Activated T-helper 1 cell treated with anti-CD3 and anti-CD28 coated beads, Interleukin-12 subunit alpha, Interleukin-12 subunit beta, Interleukin-2, Interleukin-4 antibody, amounts not matched to agents 30 ng/mL and 10 ng/mL and 1 ng/mL, durations not matched to agents 14 hours and 24 hours and 36 hours (primary cell): ENCODE measurements at regions of chr1 and their contacts with region 1.

Region 1: DNA sequence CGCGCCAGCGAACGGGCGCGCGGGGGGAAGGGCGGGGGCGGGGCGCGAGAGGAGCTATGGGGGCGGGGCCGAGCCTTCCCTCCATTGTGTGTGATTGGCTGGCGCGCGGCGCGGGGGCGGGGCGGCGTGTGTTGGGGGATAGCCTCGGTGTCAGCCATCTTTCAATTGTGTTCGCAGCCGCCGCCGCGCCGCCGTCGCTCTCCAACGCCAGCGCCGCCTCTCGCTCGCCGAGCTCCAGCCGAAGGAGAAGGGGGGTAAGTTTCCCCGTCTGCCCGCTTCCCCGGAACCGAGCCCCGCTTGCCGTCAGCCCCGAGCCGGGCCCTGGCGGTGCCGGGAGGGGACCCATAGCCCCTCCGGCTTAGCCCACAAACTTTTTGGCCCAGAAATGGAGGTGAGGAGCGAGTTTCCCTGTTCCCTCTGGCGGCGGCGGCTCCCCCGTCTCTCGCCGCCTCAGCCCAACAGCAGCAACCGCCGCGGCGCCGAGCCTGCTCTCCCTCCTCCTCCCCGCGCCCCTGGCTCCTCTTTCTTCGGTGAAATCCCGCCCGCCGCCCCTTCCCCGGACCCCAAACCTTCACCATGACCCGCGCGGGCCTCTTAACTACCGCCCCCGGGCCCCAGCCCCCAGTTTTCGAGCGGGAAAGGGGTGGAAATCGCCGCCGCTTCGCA is at the start of gene H3-3A:
- DNase-seq: peak; percentile 97
- H3K4me3 Mint-ChIP-seq: peak within 1 kb of the TSS; percentile 100
- H3K27ac Mint-ChIP-seq: peak within 1 kb of the TSS; percentile 100
- H3K4me1 Mint-ChIP-seq: peaks cover 36% of the 10 kb centered on the region
- H3K27me3 Mint-ChIP-seq: no peaks in the 10 kb centered on the region
- total RNA-seq, gene H3-3A: 416 and 426 TPM in 2 replicates

Region 2: DNA sequence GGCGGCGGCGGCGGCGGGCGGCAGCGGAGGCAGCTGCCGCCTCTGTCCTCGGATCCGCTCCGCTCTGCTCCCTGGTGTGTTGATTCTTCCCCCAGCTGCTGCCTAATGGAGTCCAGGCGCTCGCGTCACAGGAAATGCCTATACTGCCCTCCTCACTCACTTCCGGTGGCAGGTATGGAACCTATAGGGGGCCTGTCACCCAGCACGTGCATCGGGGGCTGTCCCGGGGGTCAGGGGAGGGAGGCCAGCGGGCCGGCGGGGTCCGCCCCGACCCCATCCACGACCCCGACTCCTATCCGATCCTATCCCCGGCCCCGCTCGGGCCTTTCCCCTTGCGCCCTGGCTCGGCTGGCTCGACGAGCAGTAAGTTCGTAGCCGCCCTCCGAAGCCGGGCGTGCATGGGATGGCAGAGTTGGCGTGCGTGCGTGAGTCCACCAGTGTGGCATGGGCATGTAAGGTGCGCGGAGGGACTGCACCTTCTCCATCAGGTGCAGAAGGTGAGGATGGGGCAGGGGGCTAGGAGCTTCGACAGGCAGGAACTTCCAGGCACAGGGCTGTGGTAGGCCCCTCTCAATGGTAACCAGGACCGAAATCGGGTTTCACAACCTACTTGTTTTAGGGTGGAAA is 1627.9 kb before region 1 on chr1 and contains the start of gene WDR26:
- intact Hi-C with region 1: loop called (anchors 2 kb)
- DNase-seq: peak; percentile 83
- H3K4me3 Mint-ChIP-seq: peak within 1 kb of the TSS; percentile 92
- H3K27ac Mint-ChIP-seq: peak within 1 kb of the TSS; percentile 95
- H3K4me1 Mint-ChIP-seq: peaks cover 53% of the 10 kb centered on the region
- H3K27me3 Mint-ChIP-seq: no peaks in the 10 kb centered on the region
- total RNA-seq, gene WDR26: 91.6 and 95.8 TPM in 2 replicates

Region 3: DNA sequence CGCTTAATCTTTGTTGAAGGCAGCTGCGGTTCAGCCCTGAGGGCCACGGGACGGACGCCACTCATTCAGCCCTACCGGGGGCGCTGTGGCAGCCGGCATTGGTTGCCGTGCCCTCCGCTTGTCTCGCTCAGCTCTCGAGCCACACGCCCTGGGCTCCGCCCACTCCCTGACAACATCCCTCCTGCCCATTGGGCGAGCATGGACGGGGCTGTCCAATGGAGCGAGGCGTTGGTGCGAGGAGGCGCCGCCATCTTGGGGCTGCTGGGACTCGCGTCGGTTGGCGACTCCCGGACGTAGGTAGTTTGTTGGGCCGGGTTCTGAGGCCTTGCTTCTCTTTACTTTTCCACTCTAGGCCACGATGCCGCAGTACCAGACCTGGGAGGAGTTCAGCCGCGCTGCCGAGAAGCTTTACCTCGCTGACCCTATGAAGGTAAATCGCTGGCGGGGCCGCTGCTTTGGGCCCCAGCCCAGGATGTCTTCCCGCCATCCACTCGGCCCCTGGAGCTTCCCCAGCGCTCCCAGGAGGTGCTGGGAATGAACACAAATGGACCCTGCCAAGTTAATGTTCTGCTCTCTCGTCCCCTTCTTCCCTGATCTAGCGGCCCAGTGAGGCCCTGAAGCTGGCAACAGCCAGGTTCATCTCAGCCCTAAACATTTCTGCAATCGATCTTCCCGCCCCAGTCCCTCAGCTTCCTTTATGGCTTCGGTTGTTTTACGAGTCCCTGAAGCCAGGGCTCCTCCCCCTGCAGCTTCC is 284.9 kb before region 1 on chr1 and contains the start of gene SRP9:
- intact Hi-C with region 1: loop called (anchors 10 kb)
- DNase-seq: peak; percentile 99
- H3K4me3 Mint-ChIP-seq: no peak within 1 kb of the TSS
- H3K27ac Mint-ChIP-seq: no peak within 1 kb of the TSS
- H3K4me1 Mint-ChIP-seq: peaks cover 29% of the 10 kb centered on the region
- H3K27me3 Mint-ChIP-seq: no peaks in the 10 kb centered on the region
- total RNA-seq, gene SRP9: 230 and 233 TPM in 2 replicates

Region 4: DNA sequence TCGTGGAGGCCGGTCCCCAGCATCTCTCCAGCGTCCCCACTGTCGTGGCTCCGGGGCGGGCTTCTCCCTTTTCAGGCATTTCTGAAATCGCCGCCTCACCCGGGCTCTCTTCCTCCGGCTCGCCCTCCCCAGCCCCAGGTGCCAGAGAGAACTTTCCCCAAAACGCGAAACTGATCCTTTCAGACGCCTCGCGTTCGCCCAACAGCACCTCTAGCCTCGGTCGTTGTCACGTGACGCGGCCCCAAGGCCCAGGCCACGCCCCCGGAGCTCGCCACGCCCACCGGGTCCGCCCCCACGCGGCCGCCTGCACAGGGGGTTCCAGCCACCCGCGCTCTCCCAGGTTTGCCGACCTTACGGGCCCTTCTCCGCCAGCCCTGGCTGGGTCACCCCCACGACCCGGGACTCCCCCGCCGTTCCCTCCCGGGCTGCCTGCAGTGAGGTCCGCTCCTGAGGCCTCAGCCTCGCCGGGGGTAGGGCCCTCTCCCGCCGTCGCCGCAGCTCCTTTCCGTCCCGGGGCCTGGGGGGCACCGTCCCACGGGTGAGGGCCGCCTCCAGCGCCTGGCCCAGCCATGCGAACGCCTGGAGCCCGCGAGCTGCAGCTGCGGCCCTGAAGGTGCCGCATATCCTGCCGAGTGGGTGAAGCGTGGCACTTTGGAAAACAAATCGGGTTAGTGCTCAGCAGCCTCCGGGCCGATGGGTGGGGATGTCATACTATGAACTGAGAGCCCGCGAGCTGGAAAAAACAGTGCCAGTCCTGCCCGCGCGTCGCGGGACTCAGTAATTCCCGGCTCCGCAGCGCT is 20.8 kb after region 1 on chr1:
- intact Hi-C with region 1: loop called (anchors 1 kb)
- DNase-seq: peak; percentile 91
- H3K4me3 Mint-ChIP-seq: peak overlapping the region; percentile 89
- H3K27ac Mint-ChIP-seq: peak overlapping the region; percentile 79
- H3K4me1 Mint-ChIP-seq: peaks cover 12% of the 10 kb centered on the region
- H3K27me3 Mint-ChIP-seq: peaks cover 15% of the 10 kb centered on the region

Region 5: DNA sequence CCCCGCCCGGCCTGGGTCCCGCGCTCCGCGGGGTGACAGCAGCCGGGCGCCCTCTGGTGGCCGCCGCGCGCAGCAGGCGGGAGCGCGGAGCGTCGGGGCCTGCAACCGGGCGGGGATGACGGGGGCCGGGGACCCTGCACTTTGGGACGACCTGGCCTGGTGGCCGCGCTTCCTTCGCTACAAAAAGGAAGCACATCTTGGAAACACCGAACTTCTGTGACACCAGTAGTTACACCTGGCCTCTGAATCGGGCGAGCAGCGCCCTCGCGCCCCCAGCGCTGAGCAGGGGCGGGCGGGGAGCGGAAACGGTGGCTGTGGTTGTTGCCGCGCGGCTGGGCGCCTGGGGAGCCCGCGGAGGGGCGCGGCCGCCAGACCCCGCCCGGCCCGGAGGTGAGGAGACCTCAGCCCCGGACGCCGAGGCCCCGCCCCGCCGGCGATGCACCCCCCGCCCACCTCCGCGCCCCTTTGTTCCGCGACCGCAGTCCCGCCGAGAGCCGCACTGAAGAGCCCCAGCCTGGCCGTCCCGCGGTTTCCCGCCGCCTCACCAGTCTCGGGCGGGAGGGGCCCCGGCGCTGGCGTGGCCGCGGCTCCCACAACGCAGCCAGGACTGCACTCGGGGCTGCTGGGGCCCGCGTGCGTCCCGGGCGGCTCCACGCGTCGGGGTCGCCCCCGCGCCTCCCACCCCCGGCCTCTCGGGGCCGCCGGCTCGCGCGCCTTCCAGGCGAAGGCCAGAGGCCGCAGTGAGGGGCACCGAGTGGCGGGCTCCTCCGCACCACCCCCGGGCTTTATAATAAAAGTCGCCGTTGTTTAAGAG is 59.1 kb after region 1 on chr1:
- intact Hi-C with region 1: loop called (anchors 1 kb)
- DNase-seq: peak; percentile 70
- H3K4me3 Mint-ChIP-seq: peak overlapping the region; percentile 78
- H3K27ac Mint-ChIP-seq: no peak overlapping the region
- H3K4me1 Mint-ChIP-seq: peaks cover 41% of the 10 kb centered on the region
- H3K27me3 Mint-ChIP-seq: peaks cover 5% of the 10 kb centered on the region

Region 6: GRCh38 chr1:226407497-226408284 is 345.0 kb after region 1 on chr1 and contains the start of gene PARP1:
- intact Hi-C with region 1: loop called (anchors 2 kb)
- DNase-seq: peak; percentile 90
- H3K4me3 Mint-ChIP-seq: peak within 1 kb of the TSS; percentile 99
- H3K27ac Mint-ChIP-seq: peak within 1 kb of the TSS; percentile 97
- H3K4me1 Mint-ChIP-seq: peaks cover 44% of the 10 kb centered on the region
- H3K27me3 Mint-ChIP-seq: peaks cover 8% of the 10 kb centered on the region
- total RNA-seq, gene PARP1: 209 and 220 TPM in 2 replicates